ENCODE measurements at regions of chr5 and their contacts with region 1.

Region 1: GRCh38 chr5:160230686-160231527 is 1.6 kb downstream of the FABP6 start:
- DNase-seq: no peak
- ATAC-seq: peak; percentile 84
- H3K4me3 ChIP-seq: no peak overlapping the region
- H3K27ac ChIP-seq: no peak overlapping the region
- H3K4me1 ChIP-seq: peaks cover 3% of the 10 kb centered on the region; the same call in 1 of the 2 replicates
- H3K27me3 ChIP-seq: no peaks in the 10 kb centered on the region
- CTCF ChIP-seq: no peak

Region 2: GRCh38 chr5:160245506-160246086 is 14.7 kb after region 1 on chr5:
- CTCF ChIA-PET with region 1: interaction called, 12 read pairs
- POLR2A ChIA-PET with region 1: no interaction called
- in situ Hi-C with region 1: no loop called
- intact Hi-C with region 1: no loop called
- DNase-seq: no peak
- ATAC-seq: peak; percentile 31; the same call in 1 of the 2 replicates
- H3K4me3 ChIP-seq: no peak overlapping the region
- H3K27ac ChIP-seq: no peak overlapping the region
- H3K4me1 ChIP-seq: no peaks in the 10 kb centered on the region
- H3K27me3 ChIP-seq: no peaks in the 10 kb centered on the region
- CTCF ChIP-seq: no peak

Region 3: GRCh38 chr5:160260006-160260775 is 29.3 kb after region 1 on chr5:
- CTCF ChIA-PET with region 1: no interaction called
- POLR2A ChIA-PET with region 1: interaction called, 17 read pairs
- in situ Hi-C with region 1: no loop called
- intact Hi-C with region 1: no loop called
- DNase-seq: no peak
- ATAC-seq: peak; percentile 28; the same call in 1 of the 2 replicates
- H3K4me3 ChIP-seq: no peak overlapping the region
- H3K27ac ChIP-seq: no peak overlapping the region
- H3K4me1 ChIP-seq: no peaks in the 10 kb centered on the region
- H3K27me3 ChIP-seq: no peaks in the 10 kb centered on the region
- CTCF ChIP-seq: no peak

Region 4: DNA sequence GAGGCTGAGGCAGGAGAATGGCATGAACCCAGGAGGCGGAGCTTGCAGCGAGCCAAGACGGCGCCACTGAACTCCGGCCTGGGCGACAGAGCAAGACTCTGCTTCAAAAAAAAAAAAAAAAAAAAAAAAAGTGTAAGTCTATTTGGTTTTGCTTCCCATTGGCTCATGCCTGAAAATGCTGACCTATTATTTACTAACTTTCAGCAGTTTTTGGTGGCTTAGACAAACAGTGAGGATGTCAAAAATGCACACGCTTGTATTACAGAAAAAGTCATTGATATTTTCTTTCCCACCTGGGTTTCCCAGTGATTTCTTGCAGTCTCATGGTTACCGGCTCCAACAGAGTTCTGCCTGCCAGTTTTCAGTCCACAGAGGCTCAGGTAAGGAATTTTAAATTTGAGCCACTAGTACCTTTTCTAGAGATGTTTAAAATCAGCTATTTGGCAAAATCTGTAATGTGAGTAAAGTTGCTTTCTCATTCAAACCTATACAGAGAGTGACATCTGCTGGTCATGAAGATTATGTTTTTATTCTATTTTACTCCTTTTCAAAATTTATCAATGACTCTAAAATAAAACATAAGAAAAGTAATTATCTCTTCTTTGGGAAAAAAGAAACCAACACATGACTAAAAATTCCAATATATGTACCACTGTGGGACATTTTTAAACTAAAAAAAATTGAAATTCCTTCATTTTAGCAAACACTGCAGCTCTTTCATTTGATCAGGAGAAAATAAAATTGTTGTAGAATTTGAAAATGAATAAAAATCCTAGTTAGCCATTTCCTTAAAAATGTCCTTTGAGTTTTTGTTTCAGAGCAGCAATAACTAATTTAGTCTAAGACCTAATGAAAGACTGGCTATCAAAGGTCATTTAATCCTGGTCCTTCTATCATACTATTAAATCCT is 160.1 kb after region 1 on chr5:
- CTCF ChIA-PET with region 1: interaction called, 15 read pairs
- POLR2A ChIA-PET with region 1: no interaction called
- in situ Hi-C with region 1: no loop called
- intact Hi-C with region 1: no loop called
- DNase-seq: no peak
- ATAC-seq: no peak
- H3K4me3 ChIP-seq: no peak overlapping the region
- H3K27ac ChIP-seq: no peak overlapping the region
- H3K4me1 ChIP-seq: no peaks in the 10 kb centered on the region
- H3K27me3 ChIP-seq: no peaks in the 10 kb centered on the region
- CTCF ChIP-seq: peak; percentile 65; the same call in 1 of the 2 replicates